HCT116 (cell line): ENCODE measurements at regions of chr2 and their contacts with region 1.

Region 1: GRCh38 chr2:192194866-192195547 is at the start of gene TMEFF2:
- DNase-seq: no peak
- ATAC-seq: no peak
- H3K4me3 ChIP-seq: peak within 1 kb of the TSS; percentile 43 to 48
- H3K27ac ChIP-seq: no peak within 1 kb of the TSS
- H3K4me1 ChIP-seq: no peaks in the 10 kb centered on the region
- H3K27me3 ChIP-seq: no peaks in the 10 kb centered on the region
- CTCF ChIP-seq: no peak
- POLR2A ChIP-seq: no peak
- RAD21 ChIP-seq: no peak
- total RNA-seq, gene TMEFF2: not detected

Region 2: DNA sequence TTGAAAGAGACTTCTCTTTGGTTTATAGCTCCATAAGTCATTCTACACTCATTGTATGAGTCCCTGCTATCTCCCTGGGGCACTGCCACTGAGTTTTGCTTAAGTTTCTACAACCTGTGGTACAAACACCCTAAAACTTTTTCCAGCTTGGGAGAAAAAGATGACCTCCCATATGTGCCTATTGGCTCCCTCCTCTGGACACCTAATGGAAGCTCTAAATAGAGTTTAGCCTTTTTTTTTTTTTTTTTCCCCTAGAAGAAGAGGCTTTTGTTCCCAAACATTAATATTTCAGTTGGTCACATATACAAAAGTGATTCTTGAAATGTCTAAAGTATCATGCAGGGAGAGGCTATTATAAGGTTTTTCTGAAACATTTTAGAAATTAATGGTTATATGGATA is 546.9 kb after region 1 on chr2:
- CTCF ChIA-PET with region 1: no interaction called
- POLR2A ChIA-PET with region 1: no interaction called
- RAD21 ChIA-PET with region 1: no interaction called
- intact Hi-C with region 1: loop called (anchors 5 kb)
- DNase-seq: peak; percentile 3
- ATAC-seq: peak; percentile 62
- H3K4me3 ChIP-seq: no peak overlapping the region
- H3K27ac ChIP-seq: no peak overlapping the region
- H3K4me1 ChIP-seq: no peaks in the 10 kb centered on the region
- H3K27me3 ChIP-seq: no peaks in the 10 kb centered on the region
- CTCF ChIP-seq: peak; percentile 25 to 56 (median 46); a peak in 5 of 6 replicates
- POLR2A ChIP-seq: no peak
- RAD21 ChIP-seq: peak; percentile 51

Region 3: GRCh38 chr2:193187816-193188215 is 992.8 kb after region 1 on chr2:
- CTCF ChIA-PET with region 1: no interaction called
- POLR2A ChIA-PET with region 1: no interaction called
- RAD21 ChIA-PET with region 1: no interaction called
- intact Hi-C with region 1: no loop called
- DNase-seq: no peak
- ATAC-seq: no peak
- H3K4me3 ChIP-seq: no peak overlapping the region
- H3K27ac ChIP-seq: no peak overlapping the region
- H3K4me1 ChIP-seq: peaks cover 0 to 4% of the 10 kb centered on the region in 2 experiments; a peak in 1 of 4 replicates
- H3K27me3 ChIP-seq: no peaks in the 10 kb centered on the region
- CTCF ChIP-seq: no peak
- POLR2A ChIP-seq: no peak
- RAD21 ChIP-seq: no peak